ENCODE measurements at regions of chr7 and their contacts with region 1.

Region 1: DNA sequence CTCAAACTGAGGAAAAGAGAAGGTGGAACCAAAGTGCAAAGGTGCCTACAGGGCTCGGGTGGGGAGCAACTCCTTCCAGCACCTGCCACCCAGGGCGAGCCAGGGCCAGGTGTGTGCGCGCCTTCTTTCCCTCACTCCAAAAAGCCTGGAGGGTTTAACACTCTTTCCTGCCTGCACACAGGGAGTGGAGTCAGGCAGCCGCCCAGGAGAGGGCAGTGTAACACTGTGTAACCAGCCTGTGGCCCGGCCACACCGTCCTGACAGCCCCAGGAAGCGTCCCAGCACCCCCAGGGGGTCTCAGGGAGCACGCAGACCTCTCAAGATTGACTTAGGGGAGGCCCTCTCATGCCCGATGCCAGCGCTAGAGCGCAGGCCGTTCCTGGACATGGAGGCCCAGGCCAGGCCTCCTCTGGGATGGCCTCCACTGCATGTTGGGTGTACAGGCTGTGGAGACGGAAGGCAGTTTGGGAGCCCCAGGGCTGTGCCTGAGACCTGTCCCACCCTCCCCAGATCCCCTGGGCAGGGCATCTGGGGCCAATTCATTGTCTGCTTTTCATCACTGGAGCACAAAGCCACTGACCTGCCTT is 13.4 kb downstream of the BRI3 start:
- DNase-seq: peak; percentile 72
- ATAC-seq: peak; percentile 78
- H3K4me3 ChIP-seq: no peak overlapping the region
- H3K4me3 Mint-ChIP-seq: no peak overlapping the region
- H3K27ac ChIP-seq: no peak overlapping the region
- H3K27ac Mint-ChIP-seq: no peak overlapping the region
- H3K4me1 ChIP-seq: peaks cover 0 to 3% of the 10 kb centered on the region in 2 donors
- H3K4me1 Mint-ChIP-seq: no peaks in the 10 kb centered on the region
- H3K27me3 ChIP-seq: no peaks in the 10 kb centered on the region
- H3K27me3 Mint-ChIP-seq: no peaks in the 10 kb centered on the region
- CTCF ChIP-seq: peak; percentile 76

Region 2: GRCh38 chr7:96707971-96708370 is 1586.9 kb before region 1 on chr7:
- CTCF ChIA-PET with region 1: no interaction called
- POLR2A ChIA-PET with region 1: interaction called, 14 read pairs
- intact Hi-C with region 1: no loop called
- DNase-seq: no peak
- ATAC-seq: no peak
- H3K4me3 ChIP-seq: peak overlapping the region in 1 of 5 experiments; percentile 5
- H3K4me3 Mint-ChIP-seq: peak overlapping the region; percentile 52
- H3K27ac ChIP-seq: no peak overlapping the region
- H3K27ac Mint-ChIP-seq: no peak overlapping the region
- H3K4me1 ChIP-seq: peaks cover 13 to 16% of the 10 kb centered on the region in 2 donors
- H3K4me1 Mint-ChIP-seq: peaks cover 38% of the 10 kb centered on the region
- H3K27me3 ChIP-seq: peaks cover 0 to 2% (median 0%) of the 10 kb centered on the region in 4 experiments
- H3K27me3 Mint-ChIP-seq: no peaks in the 10 kb centered on the region
- CTCF ChIP-seq: no peak

Region 3: DNA sequence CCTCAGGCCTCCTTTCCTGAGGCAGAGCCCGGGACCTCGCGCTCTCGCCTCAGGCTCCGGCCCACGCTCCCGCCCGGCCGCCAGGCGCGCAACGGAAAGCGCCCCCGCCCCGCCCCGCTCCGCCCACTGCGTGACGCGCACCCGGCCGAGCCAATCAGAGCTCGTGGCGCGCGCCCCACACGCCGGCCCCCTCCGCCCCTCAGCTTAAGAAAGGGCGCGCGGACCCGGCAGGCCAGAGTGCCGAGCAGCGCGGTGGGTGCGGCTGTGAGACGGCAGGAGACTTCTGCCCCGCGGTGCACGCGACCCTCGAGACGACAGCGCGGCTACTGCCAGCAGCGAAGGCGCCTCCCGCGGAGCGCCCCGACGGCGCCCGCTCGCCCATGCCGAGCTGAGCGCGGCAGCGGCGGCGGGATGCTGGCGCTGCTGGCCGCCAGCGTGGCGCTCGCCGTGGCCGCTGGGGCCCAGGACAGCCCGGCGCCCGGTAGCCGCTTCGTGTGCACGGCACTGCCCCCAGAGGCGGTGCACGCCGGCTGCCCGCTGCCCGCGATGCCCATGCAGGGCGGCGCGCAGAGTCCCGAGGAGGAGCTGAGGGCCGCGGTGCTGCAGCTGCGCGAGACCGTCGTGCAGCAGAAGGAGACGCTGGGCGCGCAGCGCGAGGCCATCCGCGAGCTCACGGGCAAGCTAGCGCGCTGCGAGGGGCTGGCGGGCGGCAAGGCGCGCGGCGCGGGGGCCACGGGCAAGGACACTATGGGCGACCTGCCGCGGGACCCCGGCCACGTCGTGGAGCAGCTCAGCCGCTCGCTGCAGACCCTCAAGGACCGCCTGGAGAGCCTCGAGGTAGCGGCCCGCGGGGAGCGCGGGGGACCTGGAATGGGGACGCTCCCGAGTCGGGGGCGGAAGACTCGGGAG is 322.4 kb after region 1 on chr7 and contains the start of gene NPTX2:
- CTCF ChIA-PET with region 1: no interaction called
- POLR2A ChIA-PET with region 1: no interaction called
- intact Hi-C with region 1: no loop called
- DNase-seq: no peak
- ATAC-seq: no peak
- H3K4me3 ChIP-seq: no peak within 1 kb of the TSS
- H3K4me3 Mint-ChIP-seq: no peak within 1 kb of the TSS
- H3K27ac ChIP-seq: no peak within 1 kb of the TSS
- H3K27ac Mint-ChIP-seq: no peak within 1 kb of the TSS
- H3K4me1 ChIP-seq: no peaks in the 10 kb centered on the region
- H3K4me1 Mint-ChIP-seq: peaks cover 2% of the 10 kb centered on the region
- H3K27me3 ChIP-seq: peaks cover 0 to 50% (median 8%) of the 10 kb centered on the region in 4 experiments
- H3K27me3 Mint-ChIP-seq: peaks cover 62% of the 10 kb centered on the region
- CTCF ChIP-seq: no peak
- total RNA-seq, gene NPTX2: not detected in 2 replicates

Measured in B cell (primary cell).